HEK293 (cell line): ENCODE measurements at regions of chr5 and their contacts with region 1.

Region 1: DNA sequence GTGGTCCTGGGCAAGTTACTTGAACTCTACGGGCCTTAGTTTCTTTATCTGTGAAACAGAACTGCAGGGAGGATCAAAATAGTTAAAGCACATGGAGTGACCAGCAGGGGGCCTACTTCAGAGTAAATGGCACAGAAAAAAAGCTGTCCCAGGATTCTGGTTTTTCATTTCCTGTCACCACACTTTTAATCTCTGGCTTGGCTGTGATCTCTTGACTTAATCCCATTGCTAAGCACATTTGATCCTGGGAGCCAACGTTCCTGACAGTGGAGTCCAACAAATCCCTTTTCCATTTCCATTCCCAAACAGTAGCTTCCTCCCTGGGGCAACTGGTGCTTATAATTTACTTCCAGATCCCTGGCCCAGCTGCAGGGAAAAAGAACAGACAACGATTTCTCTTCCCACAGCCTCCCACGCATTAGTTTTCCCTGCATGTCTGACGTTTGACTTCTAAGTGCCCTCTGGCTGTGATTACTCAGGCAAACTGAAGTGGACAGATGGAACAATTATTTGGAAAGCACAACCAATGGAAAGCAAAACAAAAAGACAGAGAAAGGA is 136.5 kb upstream of the STK32A start:
- H3K4me3 ChIP-seq: no peak overlapping the region
- H3K27ac ChIP-seq: no peak overlapping the region
- H3K4me1 ChIP-seq: no peaks in the 10 kb centered on the region
- CTCF ChIP-seq: no peak

Region 2: DNA sequence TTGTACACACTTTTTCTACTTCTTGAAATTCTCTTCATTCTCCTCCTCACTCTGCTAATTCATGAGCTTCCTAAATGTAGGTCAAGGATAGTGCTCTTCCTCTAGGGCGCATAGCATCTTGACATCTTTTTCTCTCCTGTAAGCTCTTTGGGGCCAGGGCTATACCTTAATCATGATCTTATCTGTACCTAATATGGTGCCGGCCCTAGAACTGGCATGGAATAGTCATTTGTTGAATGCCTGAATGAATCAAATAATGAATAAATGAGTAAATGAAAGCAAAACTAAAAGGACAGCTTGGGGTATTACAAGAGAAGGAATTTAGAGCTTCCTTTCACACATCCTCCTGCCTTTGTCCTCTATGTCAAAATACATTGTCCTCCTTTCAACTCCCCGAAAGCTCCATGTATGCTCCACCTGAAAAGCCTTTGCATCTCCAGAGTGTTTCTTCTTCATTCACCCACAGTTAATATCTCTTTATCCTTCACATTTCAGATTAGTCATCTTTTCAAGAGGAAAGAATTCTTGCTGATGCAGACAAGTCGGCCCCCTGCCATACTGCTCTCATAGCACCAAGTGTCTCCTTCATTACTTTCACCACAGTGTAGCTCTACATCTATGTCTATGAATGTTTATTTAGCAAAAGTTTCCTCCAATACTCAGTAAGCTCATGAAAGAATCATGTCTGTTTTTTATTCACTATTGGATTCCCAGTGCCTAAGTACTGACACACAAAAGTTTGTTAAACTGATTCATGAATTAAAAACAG is 203.4 kb before region 1 on chr5:
- CTCF ChIA-PET with region 1: no interaction called
- POLR2A ChIA-PET with region 1: no interaction called
- H3K4me3 ChIP-seq: no peak overlapping the region
- H3K27ac ChIP-seq: no peak overlapping the region
- H3K4me1 ChIP-seq: no peaks in the 10 kb centered on the region
- CTCF ChIP-seq: no peak

Region 3: DNA sequence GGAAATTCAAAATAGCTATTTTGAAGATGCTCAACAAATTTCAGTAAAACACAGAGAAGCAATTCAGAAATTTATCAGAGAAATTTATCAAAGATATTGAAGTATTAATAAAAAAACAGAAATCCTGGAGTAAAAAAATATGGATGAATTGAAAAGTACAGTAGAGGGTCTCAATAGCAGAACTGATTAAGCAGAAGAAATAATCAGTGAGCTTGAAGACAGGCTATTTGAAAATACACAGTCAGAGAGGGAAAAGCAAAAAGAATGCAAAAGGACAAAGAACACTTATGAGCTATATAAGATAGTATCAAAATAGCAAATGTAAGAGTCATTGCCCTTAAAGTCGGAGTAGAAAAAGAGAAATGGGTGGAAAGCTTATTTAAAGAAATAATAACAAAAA is 111.8 kb before region 1 on chr5:
- CTCF ChIA-PET with region 1: no interaction called
- POLR2A ChIA-PET with region 1: no interaction called
- H3K4me3 ChIP-seq: no peak overlapping the region
- H3K27ac ChIP-seq: no peak overlapping the region
- H3K4me1 ChIP-seq: no peaks in the 10 kb centered on the region
- CTCF ChIP-seq: no peak

Region 4: GRCh38 chr5:147062101-147062821 is 36.1 kb before region 1 on chr5:
- CTCF ChIA-PET with region 1: no interaction called
- POLR2A ChIA-PET with region 1: no interaction called
- H3K4me3 ChIP-seq: no peak overlapping the region
- H3K27ac ChIP-seq: no peak overlapping the region
- H3K4me1 ChIP-seq: no peaks in the 10 kb centered on the region
- CTCF ChIP-seq: no peak

Region 5: DNA sequence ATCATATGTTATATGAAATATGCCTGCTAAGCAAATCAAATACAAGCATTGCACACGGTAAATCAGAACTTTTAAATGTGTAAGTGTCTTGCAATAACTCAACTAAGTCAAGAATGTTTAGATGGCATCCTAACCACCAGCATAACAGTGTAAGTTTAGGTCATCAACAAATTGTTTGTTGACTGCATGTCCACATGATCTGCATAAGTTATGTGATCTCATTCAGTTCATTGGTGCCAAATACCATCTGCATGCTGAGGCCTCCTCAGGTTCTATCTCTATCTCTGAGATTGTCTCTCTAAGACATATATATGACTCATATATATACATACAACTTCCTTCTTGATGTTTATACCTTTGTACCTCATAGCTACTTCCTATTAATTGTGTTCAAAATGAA is 23.1 kb before region 1 on chr5:
- CTCF ChIA-PET with region 1: interaction called, 10 read pairs
- POLR2A ChIA-PET with region 1: no interaction called
- H3K4me3 ChIP-seq: no peak overlapping the region
- H3K27ac ChIP-seq: no peak overlapping the region
- H3K4me1 ChIP-seq: no peaks in the 10 kb centered on the region
- CTCF ChIP-seq: no peak

Region 6: GRCh38 chr5:147087351-147087750 is 11.0 kb before region 1 on chr5:
- CTCF ChIA-PET with region 1: interaction called, 11 read pairs
- POLR2A ChIA-PET with region 1: no interaction called
- H3K4me3 ChIP-seq: no peak overlapping the region
- H3K27ac ChIP-seq: no peak overlapping the region
- H3K4me1 ChIP-seq: no peaks in the 10 kb centered on the region
- CTCF ChIP-seq: no peak

Region 7: GRCh38 chr5:147403651-147404640 is 305.6 kb after region 1 on chr5:
- CTCF ChIA-PET with region 1: no interaction called
- POLR2A ChIA-PET with region 1: no interaction called
- H3K4me3 ChIP-seq: no peak overlapping the region
- H3K27ac ChIP-seq: no peak overlapping the region
- H3K4me1 ChIP-seq: no peaks in the 10 kb centered on the region
- CTCF ChIP-seq: no peak